A673 (cell line): ENCODE measurements at regions of chr18 and their contacts with region 1.

Region 1: DNA sequence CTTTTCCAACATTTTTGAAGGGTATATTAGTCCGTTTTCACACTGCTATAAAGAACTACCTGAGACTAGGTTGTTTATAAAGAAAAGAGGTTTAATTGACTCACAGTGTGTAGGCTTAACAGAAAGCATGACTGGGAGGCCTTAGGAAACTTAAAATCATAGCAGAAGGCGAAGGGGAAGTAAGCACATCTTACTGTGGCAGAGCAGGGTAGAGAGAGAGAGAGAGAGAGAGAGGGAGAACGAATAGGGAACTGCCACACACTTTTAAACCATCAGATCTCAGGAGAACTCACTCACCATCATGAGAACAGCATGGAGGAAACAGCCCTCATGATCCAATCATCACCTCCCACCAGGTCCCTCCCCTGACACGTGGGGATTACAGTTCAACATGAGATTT is 420.3 kb downstream of the SOCS6 start:
- DNase-seq: no peak
- H3K4me3 ChIP-seq: no peak overlapping the region
- H3K27ac ChIP-seq: no peak overlapping the region
- H3K4me1 ChIP-seq: peaks cover 36% of the 10 kb centered on the region
- H3K27me3 ChIP-seq: no peaks in the 10 kb centered on the region
- CTCF ChIP-seq: no peak

Region 2: DNA sequence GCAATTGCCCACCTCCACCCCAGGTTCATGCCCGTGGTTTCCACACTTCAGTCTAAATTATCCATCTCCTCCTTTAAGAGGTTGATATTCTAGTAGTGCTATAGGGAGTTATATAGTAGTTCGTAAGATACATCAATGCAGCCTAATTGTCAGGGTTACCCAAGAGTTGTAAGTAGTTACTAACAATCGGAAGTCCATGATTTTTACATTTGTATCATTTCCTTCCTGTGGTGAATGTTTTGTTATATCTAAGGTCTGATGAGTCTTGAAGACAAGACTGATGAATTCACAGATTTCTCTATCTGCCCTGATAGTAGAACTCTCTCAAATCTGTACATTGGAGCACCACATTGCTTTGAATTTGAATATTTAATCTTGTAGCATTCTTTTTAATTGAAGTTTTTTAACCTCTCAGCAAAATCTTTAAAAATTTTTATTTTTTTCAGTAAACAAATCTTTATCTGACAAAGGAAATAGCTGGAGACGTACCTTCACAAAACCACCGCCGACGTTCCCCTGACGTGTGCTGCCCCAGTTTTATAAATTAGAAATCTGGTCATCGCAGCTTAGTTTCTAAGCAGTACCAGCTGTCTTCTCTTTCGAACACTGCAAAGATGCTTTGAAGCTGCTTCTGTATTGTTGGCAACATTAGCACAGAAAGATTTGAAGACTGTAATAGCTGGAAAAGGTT is 155.8 kb before region 1 on chr18:
- CTCF ChIA-PET with region 1: no interaction called
- POLR2A ChIA-PET with region 1: no interaction called
- intact Hi-C with region 1: loop called (anchors 1 kb)
- DNase-seq: peak; percentile 91
- H3K4me3 ChIP-seq: peak overlapping the region; percentile 34
- H3K27ac ChIP-seq: peak overlapping the region; percentile 93
- H3K4me1 ChIP-seq: peaks cover 38% of the 10 kb centered on the region
- H3K27me3 ChIP-seq: no peaks in the 10 kb centered on the region
- CTCF ChIP-seq: no peak

Region 3: GRCh38 chr18:70998490-70998889 is 289.3 kb after region 1 on chr18:
- CTCF ChIA-PET with region 1: no interaction called
- POLR2A ChIA-PET with region 1: no interaction called
- intact Hi-C with region 1: loop called (anchors 1 kb)
- DNase-seq: peak; percentile 33
- H3K4me3 ChIP-seq: no peak overlapping the region
- H3K27ac ChIP-seq: no peak overlapping the region
- H3K4me1 ChIP-seq: peaks cover 25% of the 10 kb centered on the region
- H3K27me3 ChIP-seq: no peaks in the 10 kb centered on the region
- CTCF ChIP-seq: peak; percentile 54